ENCODE measurements at regions of chr17 and their contacts with region 1.

Region 1: DNA sequence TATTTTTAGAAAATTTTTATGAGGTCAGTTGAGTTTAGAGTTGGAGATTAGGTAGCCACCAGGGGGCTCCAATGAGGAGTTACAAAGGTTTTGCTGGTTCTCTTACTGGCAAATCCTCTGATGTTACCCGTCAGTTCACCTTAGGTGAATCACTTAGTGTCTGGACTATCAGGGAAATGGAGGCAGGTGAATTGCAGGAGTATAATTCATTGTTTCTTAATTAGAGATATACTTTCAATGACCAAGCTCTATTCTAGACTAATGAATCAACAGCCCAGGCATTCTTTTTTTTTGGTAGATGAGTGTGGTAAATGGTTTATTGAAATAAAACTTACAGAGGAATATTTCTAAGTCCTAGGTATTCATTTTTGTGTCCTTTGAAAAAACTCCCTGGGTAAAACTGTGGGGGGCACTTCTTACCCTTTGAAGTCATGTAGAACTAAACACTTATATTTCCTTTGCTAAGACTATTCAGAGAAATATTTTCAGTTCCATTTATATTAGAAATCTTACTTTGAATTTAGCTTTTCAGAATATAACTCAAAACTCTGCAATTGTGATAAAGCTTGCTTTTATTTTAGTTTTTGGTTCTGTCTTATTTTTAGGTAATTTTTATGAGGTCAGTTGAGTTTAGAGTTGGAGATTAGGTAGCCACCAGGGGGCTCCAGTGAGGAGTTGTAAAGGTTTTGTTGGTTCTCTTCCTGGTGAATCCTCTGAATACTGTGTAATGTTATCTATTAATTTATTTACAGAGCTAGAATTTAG is 17.7 kb downstream of the PSMD11 start:
- DNase-seq: no peak
- H3K4me3 ChIP-seq: no peak overlapping the region
- H3K27me3 ChIP-seq: no peaks in the 10 kb centered on the region
- CTCF ChIP-seq: peak; percentile 63

Region 2: DNA sequence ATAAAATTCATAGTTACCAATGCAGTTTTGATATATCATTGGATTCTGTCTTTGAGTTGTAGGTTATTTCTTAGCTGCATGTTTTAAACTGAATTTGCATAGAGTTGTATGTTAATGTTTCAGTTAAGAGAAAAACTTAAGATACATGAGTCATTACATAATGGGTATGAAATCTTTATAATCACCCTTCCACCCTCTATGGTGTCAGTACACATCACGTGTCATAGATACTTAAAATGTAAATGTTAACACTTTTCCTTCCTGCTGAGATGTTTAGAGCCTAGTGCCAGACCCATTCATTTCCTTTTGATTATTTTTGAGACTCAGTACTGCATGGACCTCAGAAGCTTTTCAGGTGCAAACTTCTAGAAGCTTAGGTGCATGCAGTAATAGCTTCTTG is 91.6 kb before region 1 on chr17:
- CTCF ChIA-PET with region 1: no interaction called
- POLR2A ChIA-PET with region 1: no interaction called
- DNase-seq: no peak
- H3K4me3 ChIP-seq: no peak overlapping the region
- H3K27me3 ChIP-seq: no peaks in the 10 kb centered on the region
- CTCF ChIP-seq: no peak

Region 3: GRCh38 chr17:32444308-32445073 is 17.5 kb before region 1 on chr17 and contains the start of gene PSMD11:
- CTCF ChIA-PET with region 1: interaction called, 32 read pairs
- POLR2A ChIA-PET with region 1: no interaction called
- DNase-seq: peak; percentile 70
- H3K4me3 ChIP-seq: peak within 1 kb of the TSS; percentile 97
- H3K27me3 ChIP-seq: no peaks in the 10 kb centered on the region
- CTCF ChIP-seq: peak; percentile 98
- polyA plus RNA-seq, gene PSMD11: 71.6 and 73.5 TPM in 2 replicates

Region 4: DNA sequence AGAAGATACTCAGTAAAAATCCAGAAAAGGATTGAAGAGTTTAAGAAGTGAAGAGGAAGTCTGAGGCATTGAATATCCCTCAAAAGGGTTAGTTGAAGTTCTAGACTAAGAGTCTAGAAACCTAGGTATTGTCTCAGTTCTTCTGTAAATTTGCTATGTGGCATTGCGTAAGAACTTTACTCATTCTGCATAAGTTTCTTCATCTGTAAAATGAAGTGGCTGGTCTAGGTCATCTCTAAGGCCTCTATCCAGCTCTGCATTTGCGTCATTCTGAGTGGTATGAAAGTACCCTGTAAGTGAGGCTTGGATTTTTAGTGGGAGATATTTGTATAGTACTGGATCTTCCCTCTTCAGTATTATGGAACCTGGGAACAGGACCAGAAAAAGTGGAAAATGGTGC is 284.7 kb after region 1 on chr17:
- CTCF ChIA-PET with region 1: interaction called, 11 read pairs
- POLR2A ChIA-PET with region 1: no interaction called
- DNase-seq: no peak
- H3K4me3 ChIP-seq: no peak overlapping the region
- H3K27me3 ChIP-seq: no peaks in the 10 kb centered on the region
- CTCF ChIP-seq: no peak

Region 5: GRCh38 chr17:32755045-32755805 is 293.2 kb after region 1 on chr17:
- CTCF ChIA-PET with region 1: interaction called, 23 read pairs
- POLR2A ChIA-PET with region 1: no interaction called
- DNase-seq: peak; percentile 27
- H3K4me3 ChIP-seq: no peak overlapping the region
- H3K27me3 ChIP-seq: no peaks in the 10 kb centered on the region; the same call in 1 of the 2 replicates
- CTCF ChIP-seq: peak; percentile 44